Naive thymus-derived CD4-positive, alpha-beta T cell (primary cell): ENCODE measurements at regions of chr19 and their contacts with region 1.

Region 1: GRCh38 chr19:40650749-40651305 is 39.6 kb downstream of the NUMBL start:
- DNase-seq: no peak
- ATAC-seq: no peak
- H3K4me3 ChIP-seq: no peak overlapping the region
- H3K4me3 Mint-ChIP-seq: no peak overlapping the region
- H3K27ac ChIP-seq: no peak overlapping the region
- H3K27ac Mint-ChIP-seq: no peak overlapping the region
- H3K4me1 ChIP-seq: no peaks in the 10 kb centered on the region
- H3K4me1 Mint-ChIP-seq: no peaks in the 10 kb centered on the region
- H3K27me3 ChIP-seq: no peaks in the 10 kb centered on the region
- H3K27me3 Mint-ChIP-seq: peaks cover 0 to 10% (median 6%) of the 10 kb centered on the region in 5 donors

Region 2: GRCh38 chr19:40640744-40641143 is 10.1 kb before region 1 on chr19:
- CTCF ChIA-PET with region 1: interaction called, 12 read pairs
- POLR2A ChIA-PET with region 1: no interaction called
- intact Hi-C with region 1: no loop called
- DNase-seq: peak in 2 of 9 donors; percentile 7 to 8
- ATAC-seq: no peak
- H3K4me3 ChIP-seq: no peak overlapping the region
- H3K4me3 Mint-ChIP-seq: no peak overlapping the region
- H3K27ac ChIP-seq: no peak overlapping the region
- H3K27ac Mint-ChIP-seq: peak overlapping the region in 3 of 9 donors; percentile 33 to 73 (median 60)
- H3K4me1 ChIP-seq: no peaks in the 10 kb centered on the region
- H3K4me1 Mint-ChIP-seq: peaks cover 0 to 12% (median 6%) of the 10 kb centered on the region in 7 donors
- H3K27me3 ChIP-seq: no peaks in the 10 kb centered on the region
- H3K27me3 Mint-ChIP-seq: peaks cover 0 to 8% (median 2%) of the 10 kb centered on the region in 5 donors

Region 3: DNA sequence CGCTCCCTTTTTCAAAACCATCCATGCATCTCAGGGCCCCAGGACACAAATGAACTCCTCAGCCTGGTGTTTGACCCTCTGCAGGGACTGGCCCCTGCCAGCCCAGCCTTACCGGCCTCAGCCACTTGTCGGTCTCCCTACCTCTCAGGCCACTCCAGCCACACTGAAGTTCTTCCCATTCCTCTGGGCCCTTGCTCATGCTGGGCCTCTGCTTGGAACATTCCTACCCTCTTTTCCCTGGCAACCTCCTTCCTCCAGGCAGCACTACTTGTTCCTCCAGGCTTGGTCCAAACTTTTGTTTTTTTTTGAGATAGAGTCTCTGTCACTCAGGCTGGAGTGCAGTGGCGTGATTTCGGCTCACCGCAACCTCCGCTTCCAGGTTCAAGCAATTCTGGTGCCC is 140.5 kb after region 1 on chr19:
- CTCF ChIA-PET with region 1: no interaction called
- POLR2A ChIA-PET with region 1: no interaction called
- intact Hi-C with region 1: no loop called
- DNase-seq: no peak
- ATAC-seq: no peak
- H3K4me3 ChIP-seq: no peak overlapping the region
- H3K4me3 Mint-ChIP-seq: no peak overlapping the region
- H3K27ac ChIP-seq: no peak overlapping the region
- H3K27ac Mint-ChIP-seq: peak overlapping the region in 4 of 9 donors; percentile 28 to 73 (median 57)
- H3K4me1 ChIP-seq: no peaks in the 10 kb centered on the region
- H3K4me1 Mint-ChIP-seq: peaks cover 0 to 24% (median 7%) of the 10 kb centered on the region in 7 donors
- H3K27me3 ChIP-seq: no peaks in the 10 kb centered on the region
- H3K27me3 Mint-ChIP-seq: no peaks in the 10 kb centered on the region

Region 4: GRCh38 chr19:41144403-41144802 is 493.6 kb after region 1 on chr19:
- CTCF ChIA-PET with region 1: interaction called, 10 read pairs
- POLR2A ChIA-PET with region 1: no interaction called
- intact Hi-C with region 1: no loop called
- DNase-seq: peak; percentile 68 to 88 (median 84)
- ATAC-seq: peak; percentile 96
- H3K4me3 ChIP-seq: no peak overlapping the region
- H3K4me3 Mint-ChIP-seq: no peak overlapping the region
- H3K27ac ChIP-seq: no peak overlapping the region
- H3K27ac Mint-ChIP-seq: peak overlapping the region in 4 of 9 donors; percentile 44 to 78 (median 58)
- H3K4me1 ChIP-seq: no peaks in the 10 kb centered on the region
- H3K4me1 Mint-ChIP-seq: peaks cover 0 to 3% (median 0%) of the 10 kb centered on the region in 7 donors
- H3K27me3 ChIP-seq: no peaks in the 10 kb centered on the region
- H3K27me3 Mint-ChIP-seq: peaks cover 0 to 29% (median 15%) of the 10 kb centered on the region in 5 donors